ENCODE measurements at regions of chr18 and their contacts with region 1.

Region 1: DNA sequence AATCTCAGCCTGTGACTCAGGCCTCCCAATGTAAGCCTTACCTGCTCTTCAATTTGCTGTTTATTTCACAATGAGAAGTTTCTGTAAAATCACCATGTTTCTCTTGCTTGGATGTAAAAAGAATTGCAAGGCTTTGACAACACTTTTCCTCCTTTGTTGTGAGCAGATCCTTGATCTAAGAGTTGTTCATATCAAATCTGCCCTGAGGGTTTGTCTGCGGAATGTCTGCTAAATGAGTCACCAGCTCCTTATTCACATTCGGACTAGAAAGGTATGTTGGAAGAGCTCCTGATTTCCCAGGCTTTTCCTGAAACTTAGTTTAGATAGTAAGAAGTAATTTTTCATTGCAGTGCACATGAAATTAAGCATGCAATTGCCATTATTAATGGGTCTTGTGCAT is 268.2 kb upstream of the TCF4 start:
- DNase-seq: no peak
- ATAC-seq: no peak
- H3K4me3 ChIP-seq: no peak overlapping the region
- H3K27ac ChIP-seq: no peak overlapping the region
- H3K4me1 ChIP-seq: peaks cover 0 to 6% (median 0%) of the 10 kb centered on the region in 9 donors
- H3K27me3 ChIP-seq: no peaks in the 10 kb centered on the region
- CTCF ChIP-seq: no peak

Region 2: GRCh38 chr18:55833543-55833942 is 22.7 kb before region 1 on chr18:
- intact Hi-C with region 1: loop called in 1 of 10 experiments (anchors 2 kb)
- DNase-seq: no peak
- ATAC-seq: peak in 1 of 8 donors; percentile 80
- H3K4me3 ChIP-seq: no peak overlapping the region
- H3K27ac ChIP-seq: no peak overlapping the region
- H3K4me1 ChIP-seq: peaks cover 0 to 6% (median 0%) of the 10 kb centered on the region in 9 donors
- H3K27me3 ChIP-seq: no peaks in the 10 kb centered on the region
- CTCF ChIP-seq: no peak

Measured in heart right ventricle (tissue), 16 donors.